ENCODE measurements at regions of chr10 and their contacts with region 1.

Region 1: GRCh38 chr10:71893920-71894319 is 42.9 kb upstream of the PSAP start:
- DNase-seq: no peak
- H3K4me3 ChIP-seq: no peak overlapping the region
- H3K27ac ChIP-seq: no peak overlapping the region
- H3K4me1 ChIP-seq: peaks cover 7% of the 10 kb centered on the region
- H3K27me3 ChIP-seq: no peaks in the 10 kb centered on the region
- CTCF ChIP-seq: no peak

Region 2: GRCh38 chr10:71314028-71314693 is 579.8 kb before region 1 on chr10:
- CTCF ChIA-PET with region 1: no interaction called
- dilution Hi-C with region 1: no loop called
- in situ Hi-C with region 1: no loop called
- intact Hi-C with region 1: loop called (anchors 1 kb)
- DNase-seq: no peak
- H3K4me3 ChIP-seq: no peak overlapping the region
- H3K27ac ChIP-seq: no peak overlapping the region
- H3K4me1 ChIP-seq: no peaks in the 10 kb centered on the region
- H3K27me3 ChIP-seq: no peaks in the 10 kb centered on the region
- CTCF ChIP-seq: peak; percentile 67 to 76

Region 3: GRCh38 chr10:71795248-71795647 is 98.7 kb before region 1 on chr10:
- CTCF ChIA-PET with region 1: no interaction called
- dilution Hi-C with region 1: no loop called
- in situ Hi-C with region 1: no loop called
- intact Hi-C with region 1: no loop called
- DNase-seq: no peak
- H3K4me3 ChIP-seq: no peak overlapping the region
- H3K27ac ChIP-seq: no peak overlapping the region
- H3K4me1 ChIP-seq: no peaks in the 10 kb centered on the region
- H3K27me3 ChIP-seq: no peaks in the 10 kb centered on the region
- CTCF ChIP-seq: no peak

Region 4: DNA sequence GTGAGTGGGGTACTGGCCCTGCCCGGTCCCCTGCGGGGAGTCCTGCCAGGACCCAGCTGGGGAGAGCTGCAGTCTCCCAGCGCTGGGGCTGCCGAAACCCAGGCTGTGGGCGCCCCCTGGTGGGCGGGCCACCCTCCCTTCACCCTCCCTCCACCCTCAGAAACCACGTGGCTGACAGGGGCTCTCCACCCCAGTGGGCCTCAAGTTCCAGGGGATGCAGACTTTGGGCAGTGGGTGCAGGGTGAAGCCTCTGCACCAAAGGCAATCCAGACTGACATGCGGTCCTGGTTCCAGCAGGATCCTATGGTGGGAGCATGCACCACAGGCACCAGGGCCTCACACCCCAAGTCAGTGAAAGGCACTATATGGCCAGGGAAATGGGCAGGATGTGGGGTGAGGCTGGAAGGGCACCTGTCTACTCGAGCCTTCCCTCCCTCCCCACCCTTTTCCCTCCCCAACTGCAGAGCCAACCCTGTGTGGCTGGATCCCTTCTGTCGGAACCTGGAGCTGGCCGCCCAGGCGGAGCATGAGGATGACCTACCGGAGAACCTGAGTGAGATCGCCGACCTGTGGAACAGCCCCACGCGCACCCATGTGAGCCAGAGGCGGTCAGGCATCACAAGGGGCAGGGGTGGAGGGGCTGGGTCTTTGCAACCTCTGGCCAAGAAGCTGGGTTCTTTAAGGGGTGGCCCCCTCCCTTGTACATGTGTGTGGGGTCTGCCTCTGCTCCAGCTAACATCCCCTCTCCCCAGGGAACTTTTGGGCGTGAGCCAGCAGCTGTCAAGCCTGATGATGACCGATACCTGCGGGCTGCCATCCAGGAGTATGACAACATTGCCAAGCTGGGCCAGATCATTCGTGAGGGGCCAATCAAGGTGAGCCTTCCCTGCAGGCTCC is 81.7 kb before region 1 on chr10:
- CTCF ChIA-PET with region 1: no interaction called
- dilution Hi-C with region 1: no loop called
- in situ Hi-C with region 1: no loop called
- intact Hi-C with region 1: loop called (anchors 1 kb)
- DNase-seq: peak; percentile 29
- H3K4me3 ChIP-seq: no peak overlapping the region
- H3K27ac ChIP-seq: no peak overlapping the region
- H3K4me1 ChIP-seq: no peaks in the 10 kb centered on the region
- H3K27me3 ChIP-seq: no peaks in the 10 kb centered on the region
- CTCF ChIP-seq: peak; percentile 64 to 88

Region 5: GRCh38 chr10:71835671-71836595 is 58.0 kb before region 1 on chr10:
- CTCF ChIA-PET with region 1: interaction called, 5 read pairs
- dilution Hi-C with region 1: no loop called
- in situ Hi-C with region 1: loop called (anchors 10 kb)
- intact Hi-C with region 1: loop called (anchors 1 kb)
- DNase-seq: peak; percentile 30
- H3K4me3 ChIP-seq: no peak overlapping the region
- H3K27ac ChIP-seq: peak overlapping the region; percentile 98
- H3K4me1 ChIP-seq: peaks cover 67% of the 10 kb centered on the region
- H3K27me3 ChIP-seq: no peaks in the 10 kb centered on the region
- CTCF ChIP-seq: no peak

Region 6: GRCh38 chr10:71912431-71912830 is 18.5 kb after region 1 on chr10:
- CTCF ChIA-PET with region 1: interaction called, 15 read pairs
- dilution Hi-C with region 1: no loop called
- in situ Hi-C with region 1: no loop called
- intact Hi-C with region 1: no loop called
- DNase-seq: no peak
- H3K4me3 ChIP-seq: no peak overlapping the region
- H3K27ac ChIP-seq: no peak overlapping the region
- H3K4me1 ChIP-seq: no peaks in the 10 kb centered on the region
- H3K27me3 ChIP-seq: no peaks in the 10 kb centered on the region
- CTCF ChIP-seq: peak; percentile 21 to 30

Region 7: GRCh38 chr10:71957546-71958275 is 63.8 kb after region 1 on chr10:
- CTCF ChIA-PET with region 1: no interaction called
- dilution Hi-C with region 1: no loop called
- in situ Hi-C with region 1: no loop called
- intact Hi-C with region 1: loop called (anchors 1 kb)
- DNase-seq: no peak
- H3K4me3 ChIP-seq: no peak overlapping the region
- H3K27ac ChIP-seq: no peak overlapping the region
- H3K4me1 ChIP-seq: peaks cover 13% of the 10 kb centered on the region
- H3K27me3 ChIP-seq: no peaks in the 10 kb centered on the region
- CTCF ChIP-seq: no peak

Region 8: GRCh38 chr10:72337020-72337629 is 443.2 kb after region 1 on chr10:
- CTCF ChIA-PET with region 1: no interaction called
- dilution Hi-C with region 1: no loop called
- in situ Hi-C with region 1: no loop called
- intact Hi-C with region 1: loop called (anchors 2 kb)
- DNase-seq: peak; percentile 69
- H3K4me3 ChIP-seq: no peak overlapping the region
- H3K27ac ChIP-seq: peak overlapping the region; percentile 88
- H3K4me1 ChIP-seq: peaks cover 59% of the 10 kb centered on the region
- H3K27me3 ChIP-seq: no peaks in the 10 kb centered on the region
- CTCF ChIP-seq: peak; percentile 88 to 99